ENCODE measurements at regions of chr15 and their contacts with region 1.

Region 1: DNA sequence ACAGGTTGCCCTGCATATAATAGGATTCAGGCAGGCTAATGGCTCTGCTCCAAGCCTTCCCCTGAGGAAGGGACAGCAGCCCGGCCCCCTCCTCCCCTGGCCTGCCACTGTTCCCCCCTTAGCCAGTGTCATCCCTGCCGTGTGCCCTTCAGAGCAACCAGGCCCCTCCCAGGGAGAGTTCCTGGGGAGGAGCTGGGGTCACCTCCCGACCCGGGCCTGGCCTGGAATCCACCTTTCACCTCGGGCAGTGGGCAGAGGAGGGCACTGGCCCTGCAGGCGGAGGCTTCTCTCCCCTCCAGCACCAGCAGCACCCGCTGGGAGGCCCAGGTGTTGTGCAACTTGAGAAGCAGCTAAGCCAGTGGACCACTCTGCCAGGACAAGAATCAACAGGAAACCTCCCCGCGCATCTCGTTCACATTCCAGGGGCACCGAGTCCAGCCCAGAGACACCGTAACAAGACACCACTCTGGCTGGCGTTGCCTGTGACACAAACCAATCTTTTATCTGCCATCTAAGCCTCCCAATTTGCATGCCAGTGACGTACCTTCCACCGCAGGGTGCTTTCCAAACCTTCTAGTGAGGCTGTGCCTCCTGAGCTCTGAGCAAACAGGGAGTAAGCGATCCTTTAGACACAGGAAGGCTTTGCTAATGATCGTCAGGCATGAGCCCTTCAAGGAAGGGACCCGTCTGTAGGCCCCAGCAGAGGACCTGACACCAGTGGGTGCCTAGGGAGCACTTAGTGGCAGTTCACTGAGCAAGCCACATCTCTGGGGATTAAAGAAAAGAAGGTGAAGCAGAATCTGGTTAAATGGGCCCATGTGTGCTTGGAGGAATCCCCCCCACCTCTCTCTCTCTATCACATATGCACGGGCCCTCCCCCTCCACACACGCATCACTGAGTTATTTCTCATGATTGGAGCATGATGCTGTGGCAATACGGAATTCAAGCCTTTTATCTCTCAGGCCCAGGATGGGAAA is 98.9 kb upstream of the TLE3 start:
- DNase-seq: peak; percentile 96
- H3K4me3 ChIP-seq: no peak overlapping the region
- H3K27ac ChIP-seq: peak overlapping the region; percentile 70 to 78
- H3K4me1 ChIP-seq: no peaks in the 10 kb centered on the region
- H3K27me3 ChIP-seq: no peaks in the 10 kb centered on the region
- CTCF ChIP-seq: peak in 1 of 4 experiments; percentile 35
- POLR2A ChIP-seq: peak; percentile 50

Region 2: DNA sequence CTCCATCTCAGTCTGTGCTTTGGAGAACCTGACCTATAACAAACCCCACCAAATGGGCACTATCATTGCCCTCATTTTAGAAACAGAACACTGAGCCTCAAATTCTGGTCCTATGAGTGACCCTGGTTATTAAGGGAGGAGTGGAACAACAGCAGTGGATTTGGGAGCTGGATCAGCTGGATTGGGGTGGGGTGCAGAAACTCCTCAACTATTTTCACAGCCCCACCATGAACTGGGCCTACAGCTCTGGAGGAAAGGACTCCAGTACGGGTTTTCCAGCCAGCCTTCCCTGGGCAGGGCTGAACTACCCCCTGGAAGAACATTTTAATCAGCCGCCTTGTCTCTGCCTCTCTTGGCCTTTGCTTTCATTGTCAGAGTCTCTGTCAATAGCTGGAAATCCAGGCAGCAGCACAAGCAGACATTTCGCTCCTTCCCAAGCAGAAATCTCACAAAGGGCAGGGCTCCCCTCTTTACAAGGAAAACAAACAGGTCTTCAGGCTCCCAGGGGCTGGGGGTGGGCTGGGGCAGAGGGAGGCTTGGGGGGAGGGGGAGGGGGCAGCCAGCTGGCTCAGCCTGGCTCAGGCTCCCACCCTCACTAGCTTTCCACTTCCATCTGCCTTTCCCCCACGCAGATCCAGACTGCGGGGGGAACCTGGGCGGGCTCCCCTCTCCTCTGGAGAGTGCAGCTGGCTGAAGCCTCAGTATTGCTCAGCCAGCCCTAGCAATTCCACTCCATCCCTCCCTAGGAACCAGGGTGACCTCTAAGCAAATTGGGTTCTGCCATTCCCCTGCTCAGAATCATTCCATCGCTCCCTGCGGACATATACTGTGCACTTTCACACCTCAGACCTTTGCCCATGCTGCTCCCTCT is 85.2 kb before region 1 on chr15:
- intact Hi-C with region 1: no loop called
- DNase-seq: peak; percentile 75
- H3K4me3 ChIP-seq: peak overlapping the region in 1 of 2 donors; percentile 9
- H3K27ac ChIP-seq: peak overlapping the region; percentile 57 to 68
- H3K4me1 ChIP-seq: peaks cover 7% of the 10 kb centered on the region
- H3K27me3 ChIP-seq: no peaks in the 10 kb centered on the region
- CTCF ChIP-seq: no peak
- POLR2A ChIP-seq: no peak

Region 3: DNA sequence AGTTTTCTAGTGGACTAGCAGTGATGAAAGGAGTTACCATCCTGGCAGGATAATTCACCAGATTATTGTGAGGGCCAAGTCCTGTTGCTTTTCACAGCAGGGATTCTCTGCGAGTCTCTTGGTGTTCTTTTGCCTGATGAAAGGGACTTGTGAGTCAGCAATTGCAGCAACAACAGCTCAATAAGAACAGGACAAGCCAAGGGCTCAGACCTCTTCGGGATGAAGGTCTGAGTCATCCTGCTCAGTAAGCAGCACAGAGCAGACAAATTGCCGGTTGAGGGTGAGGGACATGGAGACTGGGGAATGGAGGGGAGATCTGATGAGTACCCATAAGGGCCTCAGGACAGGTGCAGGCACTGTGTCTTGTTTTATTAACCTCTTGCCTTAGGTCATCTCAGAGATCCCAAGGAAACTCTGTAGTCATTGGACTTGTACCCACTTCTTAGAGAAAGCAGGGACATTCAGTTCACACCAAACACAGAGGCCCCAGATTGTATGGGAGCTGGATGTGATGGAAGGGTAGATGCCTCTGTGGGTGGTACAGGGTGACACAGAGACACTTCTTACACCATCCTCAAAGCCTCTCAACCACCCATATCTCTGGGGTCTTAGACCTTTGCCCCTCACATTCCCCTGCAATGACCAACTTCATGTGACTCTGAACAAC is 75.0 kb after region 1 on chr15:
- intact Hi-C with region 1: loop called (anchors 5 kb)
- DNase-seq: no peak
- H3K4me3 ChIP-seq: no peak overlapping the region
- H3K27ac ChIP-seq: peak overlapping the region; percentile 33 to 44
- H3K4me1 ChIP-seq: no peaks in the 10 kb centered on the region
- H3K27me3 ChIP-seq: no peaks in the 10 kb centered on the region
- CTCF ChIP-seq: no peak
- POLR2A ChIP-seq: no peak

Region 4: DNA sequence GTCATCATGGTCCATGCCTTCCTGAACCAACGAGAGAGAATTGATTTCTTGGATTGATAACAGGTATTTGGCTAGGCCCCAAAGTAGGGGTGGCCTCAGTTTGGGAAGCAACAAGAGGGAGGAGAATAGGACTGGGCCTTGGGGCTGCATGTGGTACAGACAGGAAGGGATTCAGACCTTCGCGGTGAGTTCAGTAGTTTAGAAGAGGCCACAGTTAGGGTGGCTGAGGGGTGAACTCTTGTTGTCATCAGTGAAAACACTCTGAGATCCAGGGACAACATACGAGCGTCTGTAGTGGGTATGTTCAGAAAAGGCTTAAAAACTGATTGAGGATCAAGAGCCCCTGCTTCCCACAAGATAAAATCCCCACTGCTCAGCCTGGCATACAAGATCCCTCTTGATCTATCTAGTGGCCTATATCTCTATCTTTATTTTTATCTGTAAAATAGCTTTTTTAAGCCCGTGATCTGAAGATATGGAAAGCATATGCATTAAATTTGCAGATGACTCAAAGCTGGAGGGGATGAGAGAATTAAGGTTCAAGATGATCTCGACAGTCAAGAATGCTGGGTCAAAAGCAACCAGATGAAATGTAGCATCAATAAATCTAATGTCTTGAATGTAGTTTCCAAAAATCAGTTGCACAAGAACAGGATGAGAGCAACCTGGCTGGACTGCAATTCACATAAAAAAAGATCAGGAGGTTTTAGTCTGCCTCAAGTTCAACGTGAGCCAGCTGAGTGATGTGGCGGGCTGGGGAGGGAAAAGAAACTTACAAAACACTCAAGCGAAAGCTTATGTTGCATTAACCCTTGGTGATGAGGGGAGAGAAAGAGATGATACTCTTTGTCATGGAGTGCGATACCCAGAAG is 122.2 kb after region 1 on chr15:
- intact Hi-C with region 1: loop called (anchors 2 kb)
- DNase-seq: peak; percentile 48
- H3K4me3 ChIP-seq: no peak overlapping the region
- H3K27ac ChIP-seq: peak overlapping the region; percentile 24 to 38
- H3K4me1 ChIP-seq: peaks cover 23% of the 10 kb centered on the region
- H3K27me3 ChIP-seq: no peaks in the 10 kb centered on the region
- CTCF ChIP-seq: no peak
- POLR2A ChIP-seq: no peak

Region 5: DNA sequence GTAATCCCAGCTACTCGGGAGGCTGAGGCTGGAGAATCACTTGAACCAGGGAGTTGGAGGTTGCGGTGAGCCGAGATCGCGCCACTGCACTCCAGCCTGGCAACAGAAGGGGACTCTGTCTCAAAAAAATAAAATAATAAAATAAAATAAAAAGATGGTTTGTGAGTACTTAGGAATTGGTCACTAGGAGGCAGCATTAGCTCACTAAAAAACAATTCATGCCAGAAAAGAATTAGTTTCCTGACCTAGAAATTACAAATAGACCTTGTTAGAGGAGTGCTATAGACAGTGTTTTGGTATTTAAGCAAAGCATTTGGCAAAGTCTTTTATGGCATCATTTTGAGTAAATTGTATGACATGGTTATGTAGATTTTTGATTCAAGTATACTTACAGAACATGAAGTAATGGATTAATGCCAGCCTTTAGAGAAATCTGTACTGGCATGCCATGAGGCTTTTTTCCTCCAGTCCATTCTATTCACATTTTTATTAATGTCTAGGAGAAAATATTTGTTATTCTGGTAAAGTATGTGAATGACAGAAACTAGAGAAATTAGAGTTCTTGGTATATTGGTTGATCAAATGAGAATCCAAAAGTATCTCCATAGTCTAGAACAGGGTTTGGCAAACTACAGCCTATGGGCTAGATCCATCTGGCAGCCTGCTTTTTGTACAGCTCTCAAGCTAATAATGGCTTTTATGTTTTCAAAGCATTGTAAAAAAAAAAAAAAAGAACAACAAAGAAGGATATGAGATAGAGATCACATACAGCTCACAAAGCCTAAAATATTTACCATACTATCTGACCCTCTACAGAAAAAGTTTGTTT is 777.6 kb after region 1 on chr15:
- intact Hi-C with region 1: no loop called
- DNase-seq: no peak
- H3K4me3 ChIP-seq: no peak overlapping the region
- H3K27ac ChIP-seq: peak overlapping the region in 1 of 2 donors; percentile 31
- H3K4me1 ChIP-seq: no peaks in the 10 kb centered on the region
- H3K27me3 ChIP-seq: no peaks in the 10 kb centered on the region
- CTCF ChIP-seq: peak in 3 of 4 experiments; percentile 44 to 66 (median 64)
- POLR2A ChIP-seq: no peak

Measured in prostate gland (tissue), 2 donors.